ENCODE measurements at regions of chr6 and their contacts with region 1.

Region 1: GRCh38 chr6:109187399-109188114 is 92.2 kb downstream of the CEP57L1 start:
- DNase-seq: peak; percentile 37
- ATAC-seq: peak; percentile 81
- H3K4me3 Mint-ChIP-seq: no peak overlapping the region
- H3K27ac Mint-ChIP-seq: no peak overlapping the region
- H3K4me1 Mint-ChIP-seq: peaks cover 9% of the 10 kb centered on the region
- H3K27me3 Mint-ChIP-seq: peaks cover 3% of the 10 kb centered on the region
- CTCF ChIP-seq: peak; percentile 41

Region 2: DNA sequence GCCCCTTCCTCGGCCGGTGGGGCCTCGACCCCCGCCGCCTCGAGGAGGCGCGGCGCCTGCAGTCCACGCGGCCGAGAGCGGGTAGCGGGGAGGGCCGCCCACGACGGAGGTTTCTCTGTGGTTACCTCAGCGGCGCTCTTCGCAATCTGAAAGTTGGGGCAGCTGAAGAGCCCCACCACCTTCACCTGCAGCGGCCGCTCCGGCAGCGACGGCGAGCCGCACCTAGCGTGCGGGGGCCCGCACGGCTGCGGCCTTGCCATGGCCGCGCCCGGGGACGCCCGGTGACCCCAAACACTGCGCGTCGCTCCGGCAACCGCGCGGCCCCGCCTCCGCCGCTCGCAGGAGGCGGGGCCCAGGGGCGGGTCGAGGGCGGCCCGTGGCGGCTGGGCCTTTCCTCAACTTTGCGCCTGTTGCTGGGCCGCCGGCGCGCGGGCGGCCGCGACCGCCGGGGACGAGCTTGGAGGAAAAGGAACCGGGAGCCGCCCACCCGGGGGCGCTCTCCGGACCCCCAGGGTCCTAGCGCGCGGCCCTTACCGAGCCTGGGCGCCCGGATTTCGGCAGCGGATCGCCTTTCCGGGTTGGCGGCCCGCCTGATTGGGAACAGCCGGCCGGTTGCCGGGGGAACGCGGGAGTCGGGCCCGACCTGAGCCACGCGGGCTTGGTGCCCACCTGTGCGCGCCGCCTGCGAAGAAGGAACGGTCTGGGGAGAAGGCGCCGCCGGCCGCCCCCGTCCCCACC is 252.9 kb after region 1 on chr6 and contains the starts of genes PPIL6 and SMPD2:
- CTCF ChIA-PET with region 1: no interaction called
- POLR2A ChIA-PET with region 1: interaction called, 7 read pairs
- intact Hi-C with region 1: loop called (anchors 2 kb)
- DNase-seq: peak; percentile 89
- ATAC-seq: peak; percentile 83
- H3K4me3 Mint-ChIP-seq: peak within 1 kb of the TSS; percentile 96
- H3K27ac Mint-ChIP-seq: peak within 1 kb of the TSS; percentile 95
- H3K4me1 Mint-ChIP-seq: peaks cover 34% of the 10 kb centered on the region
- H3K27me3 Mint-ChIP-seq: no peaks in the 10 kb centered on the region
- CTCF ChIP-seq: no peak
- total RNA-seq, gene PPIL6: 0.73 and 0.91 TPM in 2 replicates
- total RNA-seq, gene SMPD2: 24.9 and 28.2 TPM in 2 replicates

Region 3: DNA sequence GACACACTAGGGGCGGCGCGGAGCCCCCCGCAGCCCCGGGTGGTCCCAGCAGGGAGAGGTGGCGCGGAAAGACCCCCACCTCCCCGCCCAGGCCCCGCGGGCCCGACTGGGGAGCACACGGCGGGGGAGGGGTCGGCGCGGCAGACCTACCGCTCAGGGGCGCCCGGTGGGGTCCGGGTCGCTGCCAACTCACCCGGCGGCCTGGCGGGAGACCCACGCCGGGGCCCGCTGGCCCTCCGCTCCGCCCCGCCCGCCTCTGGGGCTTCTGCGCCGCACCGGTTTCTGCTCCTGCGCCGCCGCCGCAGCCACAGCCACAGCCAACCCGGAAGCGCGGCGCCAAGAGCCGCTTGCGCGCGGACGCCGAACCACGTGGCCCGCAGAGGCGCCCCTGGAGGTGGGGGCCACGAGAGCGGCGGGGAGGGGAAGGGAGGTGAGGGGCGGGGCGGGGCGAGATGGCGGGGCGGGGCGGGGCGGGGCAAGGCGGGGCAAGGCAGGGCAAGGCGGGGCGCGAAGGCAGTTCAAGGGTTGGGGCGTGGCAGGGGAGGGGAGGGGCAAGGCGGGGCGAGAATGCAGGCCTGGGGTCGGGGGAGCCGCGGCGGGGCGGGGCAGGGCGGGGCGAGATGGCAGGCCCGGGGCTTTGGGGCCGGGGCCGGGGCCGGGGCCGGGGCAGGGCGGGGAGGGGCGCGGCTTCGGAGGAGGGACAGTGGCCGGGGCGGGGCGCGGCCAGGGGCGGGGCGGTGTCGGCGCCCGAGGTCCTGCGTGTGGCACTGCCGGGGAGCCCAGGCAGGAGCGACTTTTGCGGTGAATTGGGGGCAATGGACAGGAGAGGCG is 295.6 kb after region 1 on chr6 and contains the start of gene ZBTB24:
- CTCF ChIA-PET with region 1: no interaction called
- POLR2A ChIA-PET with region 1: no interaction called
- intact Hi-C with region 1: loop called (anchors 10 kb)
- DNase-seq: peak; percentile 81
- ATAC-seq: peak; percentile 82
- H3K4me3 Mint-ChIP-seq: peak within 1 kb of the TSS; percentile 95
- H3K27ac Mint-ChIP-seq: peak within 1 kb of the TSS; percentile 85
- H3K4me1 Mint-ChIP-seq: peaks cover 52% of the 10 kb centered on the region
- H3K27me3 Mint-ChIP-seq: no peaks in the 10 kb centered on the region
- CTCF ChIP-seq: no peak
- total RNA-seq, gene ZBTB24: 22.8 and 25.4 TPM in 2 replicates

Region 4: DNA sequence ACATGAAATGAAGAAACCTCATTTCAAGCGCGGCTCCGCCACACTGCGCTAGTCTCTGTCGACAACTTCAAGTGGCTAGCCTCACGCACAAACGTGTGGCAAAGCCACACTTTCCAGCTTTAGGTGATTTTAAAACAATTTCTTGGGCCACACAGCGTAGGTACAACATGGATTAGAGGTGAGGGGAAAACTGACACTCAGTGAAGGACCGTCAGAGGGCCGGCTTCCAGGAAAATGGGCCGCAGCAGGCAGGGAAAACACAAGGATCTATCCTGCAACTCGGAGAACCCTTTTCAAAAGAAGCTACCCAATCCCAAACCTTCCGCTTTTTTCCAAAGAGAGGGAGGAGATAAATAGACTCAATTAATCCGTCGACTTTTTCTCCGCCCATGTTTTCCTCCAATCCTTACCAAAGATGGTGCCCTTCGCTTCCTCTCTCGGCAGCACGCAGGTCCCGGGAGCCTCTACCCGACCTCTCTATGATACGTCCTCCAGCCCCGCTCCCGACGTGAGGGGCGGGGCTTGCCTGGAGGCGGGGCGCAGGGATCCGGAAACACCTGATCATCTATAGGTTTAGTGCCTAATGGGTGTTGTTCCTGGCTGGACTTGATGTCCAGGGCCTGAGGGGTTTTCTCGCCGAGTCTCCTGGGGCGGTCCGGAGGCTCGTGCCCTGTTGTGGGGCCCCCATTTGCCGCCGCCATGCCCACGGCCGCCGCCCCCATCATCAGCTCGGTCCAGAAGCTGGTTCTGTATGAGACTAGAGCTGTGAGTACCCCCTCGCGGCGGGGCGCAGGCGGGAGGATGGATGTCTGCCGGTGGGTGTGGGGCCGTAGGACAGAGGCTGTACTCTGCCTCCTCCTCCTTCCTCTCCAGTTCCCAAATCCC is 503.4 kb after region 1 on chr6 and contains the starts of genes AK9 and FIG4:
- CTCF ChIA-PET with region 1: interaction called, 11 read pairs
- POLR2A ChIA-PET with region 1: no interaction called
- intact Hi-C with region 1: loop called (anchors 2 kb)
- DNase-seq: peak; percentile 88
- ATAC-seq: peak; percentile 93
- H3K4me3 Mint-ChIP-seq: peak within 1 kb of the TSS; percentile 94
- H3K27ac Mint-ChIP-seq: peak within 1 kb of the TSS; percentile 95
- H3K4me1 Mint-ChIP-seq: peaks cover 42% of the 10 kb centered on the region
- H3K27me3 Mint-ChIP-seq: no peaks in the 10 kb centered on the region
- CTCF ChIP-seq: no peak
- total RNA-seq, gene AK9: 9.1 and 10.6 TPM in 2 replicates
- total RNA-seq, gene FIG4: 19.8 and 21.8 TPM in 2 replicates

Region 5: GRCh38 chr6:110053395-110054240 is 866.1 kb after region 1 on chr6:
- CTCF ChIA-PET with region 1: interaction called, 5 read pairs
- POLR2A ChIA-PET with region 1: no interaction called
- intact Hi-C with region 1: loop called (anchors 5 kb)
- DNase-seq: no peak
- ATAC-seq: no peak
- H3K4me3 Mint-ChIP-seq: no peak overlapping the region
- H3K27ac Mint-ChIP-seq: no peak overlapping the region
- H3K4me1 Mint-ChIP-seq: no peaks in the 10 kb centered on the region
- H3K27me3 Mint-ChIP-seq: peaks cover 3% of the 10 kb centered on the region
- CTCF ChIP-seq: no peak

Measured in activated B cell treated with CpG ODN at 0.5 μM for 24 hours (primary cell).